B cell (primary cell): ENCODE measurements at regions of chr6 and their contacts with region 1.

Region 1: DNA sequence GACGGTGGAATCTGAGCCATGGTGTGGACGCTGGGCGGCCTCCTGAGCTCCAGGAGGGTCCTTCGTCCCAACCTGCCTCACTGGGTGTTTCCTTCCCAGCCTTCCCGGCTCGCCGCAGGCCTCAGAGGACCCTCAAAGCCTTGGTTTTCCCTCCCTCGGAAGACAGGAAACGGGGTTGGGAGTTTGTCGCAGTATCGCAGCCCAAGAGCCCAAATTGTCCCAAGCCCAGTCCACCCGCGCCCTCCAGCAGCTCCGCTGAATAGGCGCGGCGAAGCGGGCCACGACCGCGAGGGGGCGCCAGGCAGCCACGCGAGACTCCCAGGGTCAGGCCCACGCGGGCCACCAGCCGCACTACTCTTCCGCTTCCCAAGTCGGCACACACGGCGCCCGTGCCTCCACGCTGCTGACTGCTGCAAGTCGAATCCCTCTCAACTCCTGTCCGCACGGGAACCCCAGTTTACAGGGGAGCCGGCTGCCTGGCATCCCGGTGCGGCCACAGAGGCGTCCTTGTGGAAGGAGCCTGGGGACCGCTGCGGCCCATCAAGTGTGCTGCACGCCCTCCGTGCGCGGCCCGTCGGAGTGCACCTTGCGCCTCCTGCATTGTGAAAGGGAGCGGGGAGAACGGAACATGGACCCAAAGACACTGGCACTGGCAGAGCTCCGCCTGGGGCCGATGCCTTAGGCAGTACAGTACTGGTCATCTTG is 40.4 kb upstream of the HMGA1 start:
- DNase-seq: peak; percentile 92
- ATAC-seq: peak; percentile 98
- H3K4me3 ChIP-seq: peak overlapping the region; percentile 21 to 83 (median 70)
- H3K4me3 Mint-ChIP-seq: peak overlapping the region; percentile 86
- H3K27ac ChIP-seq: peak overlapping the region in 1 of 2 donors; percentile 52
- H3K27ac Mint-ChIP-seq: peak overlapping the region; percentile 77
- H3K4me1 ChIP-seq: peaks cover 7 to 12% of the 10 kb centered on the region in 2 donors
- H3K4me1 Mint-ChIP-seq: peaks cover 12% of the 10 kb centered on the region
- H3K27me3 ChIP-seq: no peaks in the 10 kb centered on the region
- H3K27me3 Mint-ChIP-seq: no peaks in the 10 kb centered on the region
- CTCF ChIP-seq: peak; percentile 94

Region 2: GRCh38 chr6:34161857-34162515 is 34.3 kb before region 1 on chr6:
- CTCF ChIA-PET with region 1: interaction called, 45 read pairs
- POLR2A ChIA-PET with region 1: no interaction called
- intact Hi-C with region 1: loop called (anchors 2 kb)
- DNase-seq: no peak
- ATAC-seq: no peak
- H3K4me3 ChIP-seq: no peak overlapping the region
- H3K4me3 Mint-ChIP-seq: no peak overlapping the region
- H3K27ac ChIP-seq: no peak overlapping the region
- H3K27ac Mint-ChIP-seq: no peak overlapping the region
- H3K4me1 ChIP-seq: no peaks in the 10 kb centered on the region
- H3K4me1 Mint-ChIP-seq: no peaks in the 10 kb centered on the region
- H3K27me3 ChIP-seq: no peaks in the 10 kb centered on the region
- H3K27me3 Mint-ChIP-seq: peaks cover 15% of the 10 kb centered on the region
- CTCF ChIP-seq: no peak

Region 3: GRCh38 chr6:34223956-34224940 is 28.0 kb after region 1 on chr6:
- CTCF ChIA-PET with region 1: interaction called, 30 read pairs
- POLR2A ChIA-PET with region 1: interaction called, 4 read pairs
- intact Hi-C with region 1: loop called (anchors 2 kb)
- DNase-seq: peak; percentile 98
- ATAC-seq: peak; percentile 96
- H3K4me3 ChIP-seq: peak overlapping the region in 4 of 5 experiments; percentile 59 to 76 (median 74)
- H3K4me3 Mint-ChIP-seq: peak overlapping the region; percentile 57
- H3K27ac ChIP-seq: peak overlapping the region; percentile 96 to 99
- H3K27ac Mint-ChIP-seq: peak overlapping the region; percentile 91
- H3K4me1 ChIP-seq: peaks cover 33 to 42% of the 10 kb centered on the region in 2 donors
- H3K4me1 Mint-ChIP-seq: peaks cover 49% of the 10 kb centered on the region
- H3K27me3 ChIP-seq: no peaks in the 10 kb centered on the region
- H3K27me3 Mint-ChIP-seq: no peaks in the 10 kb centered on the region
- CTCF ChIP-seq: no peak

Region 4: GRCh38 chr6:34392497-34393190 is 196.4 kb after region 1 on chr6 and contains the start of gene NUDT3:
- CTCF ChIA-PET with region 1: interaction called, 8 read pairs
- POLR2A ChIA-PET with region 1: no interaction called
- intact Hi-C with region 1: loop called (anchors 2 kb)
- DNase-seq: peak; percentile 99
- ATAC-seq: peak; percentile 87
- H3K4me3 ChIP-seq: peak within 1 kb of the TSS; percentile 71 to 97 (median 87)
- H3K4me3 Mint-ChIP-seq: no peak within 1 kb of the TSS
- H3K27ac ChIP-seq: peak within 1 kb of the TSS; percentile 71 to 88
- H3K27ac Mint-ChIP-seq: peak within 1 kb of the TSS; percentile 87
- H3K4me1 ChIP-seq: peaks cover 16 to 31% of the 10 kb centered on the region in 2 donors
- H3K4me1 Mint-ChIP-seq: peaks cover 25% of the 10 kb centered on the region
- H3K27me3 ChIP-seq: no peaks in the 10 kb centered on the region
- H3K27me3 Mint-ChIP-seq: no peaks in the 10 kb centered on the region
- CTCF ChIP-seq: peak; percentile 79
- total RNA-seq, gene NUDT3: 37.4 and 40.1 TPM in 2 replicates

Region 5: DNA sequence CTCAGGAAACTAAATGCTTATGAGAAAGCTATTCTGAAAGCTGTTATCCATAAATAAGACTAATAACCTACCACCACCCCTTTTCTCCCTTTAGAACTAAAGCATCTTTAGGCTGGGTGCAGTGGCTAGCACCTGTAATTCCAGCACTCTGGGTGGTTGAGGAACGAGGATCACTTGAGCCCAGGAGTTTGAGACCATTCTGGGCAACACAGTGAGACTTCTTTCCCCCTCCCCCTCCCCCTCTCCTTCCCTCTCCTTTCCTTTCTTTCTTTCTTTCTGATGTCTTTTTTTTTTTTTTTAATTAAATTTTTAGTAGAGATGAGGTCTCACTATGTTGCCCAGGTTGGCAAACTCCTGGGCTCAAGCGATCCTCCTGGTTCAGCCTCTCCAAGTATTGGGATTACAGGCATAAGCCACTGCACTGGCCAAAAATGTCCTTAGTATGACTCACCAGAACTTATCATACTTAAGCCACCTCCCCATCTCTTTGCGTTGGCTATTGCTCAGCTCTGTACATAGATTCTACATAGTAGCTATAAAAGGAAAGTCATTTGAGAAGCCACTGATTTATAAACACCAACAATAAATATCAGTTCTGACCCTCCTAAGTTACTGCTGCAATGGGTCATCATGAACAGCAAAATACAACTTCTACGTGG is 414.7 kb after region 1 on chr6:
- CTCF ChIA-PET with region 1: interaction called, 34 read pairs
- POLR2A ChIA-PET with region 1: no interaction called
- intact Hi-C with region 1: loop called (anchors 1 kb)
- DNase-seq: no peak
- ATAC-seq: no peak
- H3K4me3 ChIP-seq: no peak overlapping the region
- H3K4me3 Mint-ChIP-seq: no peak overlapping the region
- H3K27ac ChIP-seq: peak overlapping the region in 1 of 2 donors; percentile 30
- H3K27ac Mint-ChIP-seq: no peak overlapping the region
- H3K4me1 ChIP-seq: no peaks in the 10 kb centered on the region
- H3K4me1 Mint-ChIP-seq: peaks cover 8% of the 10 kb centered on the region
- H3K27me3 ChIP-seq: no peaks in the 10 kb centered on the region
- H3K27me3 Mint-ChIP-seq: no peaks in the 10 kb centered on the region
- CTCF ChIP-seq: no peak